IMR-90 (cell line): ENCODE measurements at regions of chr6 and their contacts with region 1.

Region 1: DNA sequence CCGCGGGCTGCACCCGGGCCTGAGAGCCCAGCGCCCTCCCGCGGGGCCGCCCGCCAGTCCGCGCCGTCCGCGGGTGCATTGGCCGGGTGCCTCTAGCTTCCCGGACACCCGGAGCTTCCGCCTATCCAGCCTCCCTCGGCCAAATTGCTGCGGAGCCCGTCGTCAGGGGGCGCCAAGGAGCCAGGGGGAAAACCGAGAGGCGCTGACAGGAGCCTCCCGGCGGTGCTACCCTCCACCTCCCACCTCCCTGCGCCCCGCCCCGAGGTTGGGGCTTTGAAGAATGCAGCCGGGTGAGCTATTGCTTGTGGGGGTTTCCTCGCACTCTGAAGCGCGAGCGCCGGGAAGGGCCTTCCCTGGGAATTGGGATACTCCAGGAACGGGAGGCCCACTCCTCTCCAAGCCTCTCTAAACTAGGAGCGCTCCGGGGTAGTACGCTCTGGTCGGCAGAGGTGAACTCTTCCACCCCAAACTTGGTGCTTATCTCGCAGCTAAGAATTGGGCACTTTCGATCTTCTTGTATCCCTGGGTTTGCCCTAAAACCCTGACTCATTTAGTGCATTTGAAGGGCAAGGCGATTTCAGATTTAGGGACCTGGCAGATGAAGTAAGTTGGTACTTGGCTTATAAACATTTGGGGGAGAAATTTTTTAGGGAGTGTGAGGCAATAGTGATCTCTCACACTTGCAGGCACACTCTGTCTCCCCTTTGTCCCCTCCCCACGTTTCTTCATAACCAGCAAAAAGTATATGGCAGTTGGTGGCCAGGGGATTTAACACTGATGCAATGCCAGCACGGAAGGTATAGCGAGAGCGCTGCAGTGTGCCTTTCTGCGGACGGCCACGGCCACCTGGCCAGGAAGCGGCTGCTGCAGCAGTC is 501 bp downstream of the BEND6 start:
- DNase-seq: peak; percentile 91
- ATAC-seq: peak; percentile 78
- H3K4me3 ChIP-seq: peak overlapping the region; percentile 88
- H3K27ac ChIP-seq: peak overlapping the region; percentile 73
- H3K4me1 ChIP-seq: peaks cover 12% of the 10 kb centered on the region
- H3K27me3 ChIP-seq: no peaks in the 10 kb centered on the region
- CTCF ChIP-seq: peak; percentile 94
- POLR2A ChIP-seq: no peak; the same call in 1 of the 2 replicates
- RAD21 ChIP-seq: peak; percentile 72

Region 2: DNA sequence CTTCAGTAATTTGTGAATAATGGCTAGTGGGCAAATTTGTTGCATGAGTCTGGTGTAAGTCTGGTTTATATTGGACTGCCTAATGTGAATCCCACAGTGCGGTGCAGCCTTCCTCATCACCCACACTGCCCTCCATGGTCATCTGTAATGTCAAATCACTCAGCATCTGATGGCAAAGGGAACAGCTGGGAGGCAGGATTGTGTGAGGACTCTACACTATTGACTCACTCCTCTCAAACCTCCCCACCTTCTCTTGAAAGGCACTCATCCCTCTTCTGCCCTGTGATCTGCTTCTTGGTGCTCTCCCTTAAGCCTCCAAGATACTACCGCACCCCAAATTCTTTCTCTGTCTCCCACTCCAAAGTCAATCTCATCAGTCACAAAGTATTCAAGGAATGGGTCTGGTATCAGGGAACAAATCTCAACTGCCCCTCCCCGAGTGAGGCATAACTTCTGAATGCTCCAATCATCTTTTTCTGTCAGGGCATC is 146.5 kb before region 1 on chr6:
- CTCF ChIA-PET with region 1: no interaction called
- POLR2A ChIA-PET with region 1: no interaction called
- dilution Hi-C with region 1: no loop called
- in situ Hi-C with region 1: no loop called
- intact Hi-C with region 1: no loop called
- DNase-seq: peak; percentile 73
- ATAC-seq: peak; percentile 63
- H3K4me3 ChIP-seq: no peak overlapping the region
- H3K27ac ChIP-seq: no peak overlapping the region
- H3K4me1 ChIP-seq: peaks cover 16% of the 10 kb centered on the region
- H3K27me3 ChIP-seq: no peaks in the 10 kb centered on the region
- CTCF ChIP-seq: no peak
- POLR2A ChIP-seq: no peak
- RAD21 ChIP-seq: no peak

Region 3: GRCh38 chr6:57021086-57021720 is 65.8 kb after region 1 on chr6:
- CTCF ChIA-PET with region 1: interaction called, 5 read pairs
- POLR2A ChIA-PET with region 1: no interaction called
- dilution Hi-C with region 1: no loop called
- in situ Hi-C with region 1: no loop called
- intact Hi-C with region 1: loop called (anchors 1 kb)
- DNase-seq: peak; percentile 64
- ATAC-seq: peak; percentile 91
- H3K4me3 ChIP-seq: no peak overlapping the region
- H3K27ac ChIP-seq: no peak overlapping the region
- H3K4me1 ChIP-seq: no peaks in the 10 kb centered on the region
- H3K27me3 ChIP-seq: no peaks in the 10 kb centered on the region
- CTCF ChIP-seq: peak; percentile 58
- POLR2A ChIP-seq: no peak
- RAD21 ChIP-seq: peak; percentile 50

Region 4: GRCh38 chr6:57048577-57048976 is 93.2 kb after region 1 on chr6:
- CTCF ChIA-PET with region 1: no interaction called
- POLR2A ChIA-PET with region 1: no interaction called
- dilution Hi-C with region 1: no loop called
- in situ Hi-C with region 1: no loop called
- intact Hi-C with region 1: loop called (anchors 1 kb)
- DNase-seq: peak; percentile 25
- ATAC-seq: no peak
- H3K4me3 ChIP-seq: peak overlapping the region; percentile 13; the same call in 1 of the 2 replicates
- H3K27ac ChIP-seq: no peak overlapping the region
- H3K4me1 ChIP-seq: no peaks in the 10 kb centered on the region; the same call in 1 of the 2 replicates
- H3K27me3 ChIP-seq: no peaks in the 10 kb centered on the region
- CTCF ChIP-seq: no peak
- POLR2A ChIP-seq: no peak
- RAD21 ChIP-seq: no peak